Mammary epithelial cell (primary cell): ENCODE measurements at regions of chr4 and their contacts with region 1.

Region 1: GRCh38 chr4:121943941-121944340 is 7.9 kb downstream of the TRPC3 start:
- DNase-seq: no peak
- H3K4me3 ChIP-seq: no peak overlapping the region
- H3K27ac ChIP-seq: no peak overlapping the region
- H3K4me1 ChIP-seq: no peaks in the 10 kb centered on the region
- H3K27me3 ChIP-seq: no peaks in the 10 kb centered on the region
- CTCF ChIP-seq: peak in 1 of 2 donors; percentile 15

Region 2: DNA sequence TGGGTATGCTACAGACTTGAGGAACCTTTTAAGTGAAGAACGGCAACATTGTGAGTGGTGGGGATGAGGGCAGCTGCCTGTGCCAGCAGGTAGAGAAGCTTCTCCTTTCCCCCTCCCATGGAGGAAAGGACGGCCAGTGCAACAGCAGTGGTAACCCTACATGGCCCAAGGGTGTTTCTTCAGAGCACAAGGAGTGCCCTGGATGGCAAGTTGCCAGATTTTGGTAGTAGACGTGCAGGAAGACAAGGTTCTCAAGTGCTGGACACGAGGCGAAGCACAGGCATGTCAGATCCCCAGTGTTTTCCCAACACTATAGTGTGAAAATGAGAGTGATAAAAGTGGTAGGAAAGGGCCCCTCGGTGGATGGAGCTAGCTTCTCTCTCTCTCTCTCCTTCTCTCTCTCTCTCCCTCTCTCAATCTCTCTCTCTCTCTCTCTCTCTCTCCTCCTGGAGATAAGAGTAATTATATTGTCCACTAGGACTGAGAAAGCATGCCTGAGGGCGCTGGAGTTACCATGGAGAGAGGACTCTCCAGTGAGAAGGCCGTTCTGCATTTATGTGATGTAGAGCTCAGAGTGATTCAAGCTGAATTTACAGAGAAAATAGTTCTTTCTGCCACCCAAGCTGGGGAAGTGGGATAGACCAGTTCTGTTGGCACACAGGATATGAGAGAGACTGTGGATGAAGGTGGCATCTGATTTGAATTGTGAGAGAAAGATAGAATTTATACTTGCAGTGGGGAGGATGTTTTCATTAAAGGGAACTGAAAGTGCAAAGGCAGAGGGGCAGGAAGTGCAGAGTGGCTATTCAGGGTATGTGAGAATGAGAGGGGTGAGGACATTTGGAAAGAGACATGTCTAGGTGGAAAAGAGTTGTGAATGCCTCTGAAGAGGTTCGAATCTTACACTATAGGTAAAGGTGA is 33.6 kb after region 1 on chr4:
- CTCF ChIA-PET with region 1: no interaction called
- dilution Hi-C with region 1: loop called (anchors 5 kb)
- in situ Hi-C with region 1: no loop called
- intact Hi-C with region 1: no loop called
- DNase-seq: no peak
- H3K4me3 ChIP-seq: no peak overlapping the region
- H3K27ac ChIP-seq: no peak overlapping the region
- H3K4me1 ChIP-seq: no peaks in the 10 kb centered on the region
- H3K27me3 ChIP-seq: no peaks in the 10 kb centered on the region
- CTCF ChIP-seq: no peak